Panc1 (cell line): ENCODE measurements at regions of chr6 and their contacts with region 1.

Region 1: GRCh38 chr6:69987550-69987949 is 121.2 kb downstream of the COL19A1 start:
- DNase-seq: no peak
- ATAC-seq: no peak
- H3K4me3 ChIP-seq: no peak overlapping the region
- H3K27ac ChIP-seq: no peak overlapping the region
- H3K4me1 ChIP-seq: no peaks in the 10 kb centered on the region
- H3K27me3 ChIP-seq: no peaks in the 10 kb centered on the region
- CTCF ChIP-seq: no peak

Region 2: DNA sequence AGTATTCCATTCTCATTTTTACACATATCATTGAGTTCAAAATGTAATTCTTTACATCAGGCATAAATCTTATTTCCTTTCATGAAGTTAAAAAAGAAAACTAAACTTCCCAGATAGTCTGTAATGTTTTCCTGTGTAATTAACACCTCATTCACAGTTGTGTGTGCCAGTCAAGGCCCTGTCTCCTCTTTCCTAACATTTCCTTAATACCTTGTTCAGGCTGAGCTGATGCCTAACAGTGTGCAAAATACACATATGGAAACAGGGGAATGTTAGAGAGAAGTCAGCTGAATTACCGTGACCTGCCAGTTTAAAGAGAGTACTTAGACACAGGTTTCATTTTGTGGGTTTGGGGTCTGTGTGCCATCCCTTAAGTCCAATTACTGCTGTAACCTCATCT is 106.6 kb after region 1 on chr6:
- CTCF ChIA-PET with region 1: interaction called, 11 read pairs
- POLR2A ChIA-PET with region 1: no interaction called
- in situ Hi-C with region 1: no loop called
- intact Hi-C with region 1: no loop called
- DNase-seq: no peak
- ATAC-seq: no peak
- H3K4me3 ChIP-seq: no peak overlapping the region
- H3K27ac ChIP-seq: no peak overlapping the region
- H3K4me1 ChIP-seq: no peaks in the 10 kb centered on the region
- H3K27me3 ChIP-seq: no peaks in the 10 kb centered on the region
- CTCF ChIP-seq: no peak

Region 3: DNA sequence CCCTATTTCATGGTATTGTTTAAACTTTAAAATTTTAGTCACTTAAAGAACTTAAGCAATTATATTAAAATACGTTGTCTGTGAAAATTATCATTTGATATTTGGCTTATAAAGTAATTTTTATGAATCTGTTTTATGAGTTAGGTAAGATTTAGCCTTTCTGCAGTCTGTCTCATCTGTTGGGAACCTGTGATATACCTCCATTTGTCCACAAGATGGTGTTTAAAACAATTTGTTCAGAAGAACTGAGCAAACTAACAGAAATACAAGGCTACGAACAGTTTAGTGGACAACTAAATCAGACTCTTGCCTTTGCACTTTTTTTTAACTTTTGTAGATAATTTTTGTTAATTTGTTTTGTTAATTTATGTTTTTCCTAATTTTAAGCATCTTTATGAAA is 222.9 kb after region 1 on chr6:
- CTCF ChIA-PET with region 1: no interaction called
- POLR2A ChIA-PET with region 1: no interaction called
- in situ Hi-C with region 1: no loop called
- intact Hi-C with region 1: no loop called
- DNase-seq: no peak
- ATAC-seq: peak; percentile 70; the same call in 1 of the 2 replicates
- H3K4me3 ChIP-seq: no peak overlapping the region
- H3K27ac ChIP-seq: no peak overlapping the region
- H3K4me1 ChIP-seq: no peaks in the 10 kb centered on the region
- H3K27me3 ChIP-seq: peaks cover 8% of the 10 kb centered on the region; the same call in 1 of the 2 replicates
- CTCF ChIP-seq: peak; percentile 56; the same call in 1 of the 2 replicates

Region 4: DNA sequence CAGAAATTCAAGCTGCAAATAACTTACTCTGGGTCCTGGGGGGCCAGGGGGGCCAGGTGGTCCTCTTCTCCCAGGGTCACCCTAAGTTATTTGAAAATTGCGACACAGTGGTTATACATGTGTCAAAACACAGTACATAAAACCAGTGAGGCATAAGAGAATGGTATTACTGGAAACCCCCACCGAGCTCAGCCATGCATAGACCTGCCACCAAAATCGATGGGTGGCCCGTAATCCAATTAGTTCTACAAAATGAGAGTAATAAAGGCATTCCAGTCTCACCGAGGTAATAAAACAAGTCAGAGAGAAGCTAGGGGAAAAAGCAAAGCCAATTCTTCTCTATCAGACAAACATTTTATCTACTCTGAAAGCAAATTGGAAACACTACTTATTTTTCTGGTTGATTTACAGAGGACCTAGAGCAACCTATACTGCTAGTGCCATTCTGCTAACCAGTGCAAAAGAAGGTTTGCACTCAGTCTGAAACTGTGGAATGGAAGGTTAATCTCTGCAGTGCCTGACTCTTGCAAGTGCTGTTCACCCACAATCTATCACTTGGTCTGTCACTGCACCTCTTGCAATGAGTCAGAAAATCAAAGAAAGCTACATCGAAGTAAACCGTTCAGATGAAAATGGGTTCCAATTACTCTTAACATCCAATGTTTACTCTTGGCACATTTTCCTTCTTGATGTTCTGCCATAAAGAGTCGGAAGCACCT is 282.9 kb after region 1 on chr6:
- CTCF ChIA-PET with region 1: no interaction called
- POLR2A ChIA-PET with region 1: no interaction called
- in situ Hi-C with region 1: no loop called
- intact Hi-C with region 1: no loop called
- DNase-seq: no peak
- ATAC-seq: no peak
- H3K4me3 ChIP-seq: no peak overlapping the region
- H3K27ac ChIP-seq: no peak overlapping the region
- H3K4me1 ChIP-seq: no peaks in the 10 kb centered on the region
- H3K27me3 ChIP-seq: peaks cover 5% of the 10 kb centered on the region; the same call in 1 of the 2 replicates
- CTCF ChIP-seq: no peak